RWPE1 (cell line): ENCODE measurements at regions of chr19 and their contacts with region 1.

Region 1: DNA sequence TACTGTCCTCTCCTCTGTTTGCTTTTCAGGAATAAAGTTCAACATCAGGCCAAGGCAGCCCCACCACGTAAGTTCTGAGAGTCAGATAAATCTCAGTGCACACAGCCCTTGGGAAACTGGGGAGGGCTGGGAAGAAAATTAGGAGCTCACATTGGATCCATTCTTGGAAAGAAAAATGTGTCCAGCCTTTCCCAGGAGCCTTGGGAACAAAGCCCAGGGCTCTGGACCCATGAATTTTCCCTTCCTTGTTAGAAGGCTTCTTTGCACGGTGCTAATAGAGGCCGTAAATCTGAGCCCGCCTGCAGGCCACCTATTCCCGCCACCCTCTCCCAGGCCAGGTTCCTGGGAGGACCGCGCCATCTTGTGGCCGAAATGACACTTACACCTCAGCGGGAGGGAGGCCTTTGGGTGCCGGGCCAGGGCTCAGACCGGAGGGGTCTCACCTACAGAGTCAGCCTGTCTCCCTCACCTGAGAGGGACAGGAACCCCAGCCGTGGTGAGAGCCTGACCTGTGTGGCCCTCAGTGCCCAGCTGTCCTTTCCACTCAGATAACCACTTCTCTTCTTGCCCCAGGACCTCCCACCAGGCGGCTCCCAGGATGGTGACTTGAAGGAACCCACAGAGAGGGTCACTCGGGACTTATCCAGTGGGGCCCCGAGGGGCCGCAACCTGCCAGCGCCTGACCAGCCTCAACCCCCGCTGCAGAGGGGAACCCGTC is 25.1 kb upstream of the KCTD15 start:
- DNase-seq: peak; percentile 69
- H3K27ac ChIP-seq: no peak overlapping the region
- CTCF ChIP-seq: peak; percentile 80

Region 2: GRCh38 chr19:33416307-33417215 is 355.0 kb before region 1 on chr19:
- CTCF ChIA-PET with region 1: interaction called, 23 read pairs
- POLR2A ChIA-PET with region 1: no interaction called
- DNase-seq: peak; percentile 74
- H3K27ac ChIP-seq: no peak overlapping the region
- CTCF ChIP-seq: peak; percentile 67

Region 3: GRCh38 chr19:33430674-33431277 is 340.8 kb before region 1 on chr19:
- CTCF ChIA-PET with region 1: interaction called, 54 read pairs
- POLR2A ChIA-PET with region 1: no interaction called
- DNase-seq: peak; percentile 66
- H3K27ac ChIP-seq: no peak overlapping the region
- CTCF ChIP-seq: peak; percentile 86